Common myeloid progenitor, CD34-positive (primary cell): ENCODE measurements at regions of chr19 and their contacts with region 1.

Region 1: GRCh38 chr19:55605207-55605636 is 225 bp upstream of the ZNF865 start:
- DNase-seq: peak; percentile 95 to 97 (median 97)
- H3K4me3 ChIP-seq: peak overlapping the region; percentile 43 to 95 (median 78)
- H3K27ac ChIP-seq: peak overlapping the region; percentile 55 to 87
- H3K4me1 ChIP-seq: peaks cover 0 to 38% (median 32%) of the 10 kb centered on the region in 4 experiments
- H3K27me3 ChIP-seq: no peaks in the 10 kb centered on the region

Region 2: GRCh38 chr19:55516878-55517620 is 88.2 kb before region 1 on chr19:
- CTCF ChIA-PET with region 1: interaction called, 11 read pairs
- POLR2A ChIA-PET with region 1: interaction called, 3 read pairs
- DNase-seq: peak; percentile 90 to 93 (median 90)
- H3K4me3 ChIP-seq: peak overlapping the region in 6 of 7 experiments; percentile 27 to 79 (median 64)
- H3K27ac ChIP-seq: peak overlapping the region; percentile 6 to 79
- H3K4me1 ChIP-seq: peaks cover 0 to 7% (median 4%) of the 10 kb centered on the region in 4 experiments
- H3K27me3 ChIP-seq: no peaks in the 10 kb centered on the region

Region 3: DNA sequence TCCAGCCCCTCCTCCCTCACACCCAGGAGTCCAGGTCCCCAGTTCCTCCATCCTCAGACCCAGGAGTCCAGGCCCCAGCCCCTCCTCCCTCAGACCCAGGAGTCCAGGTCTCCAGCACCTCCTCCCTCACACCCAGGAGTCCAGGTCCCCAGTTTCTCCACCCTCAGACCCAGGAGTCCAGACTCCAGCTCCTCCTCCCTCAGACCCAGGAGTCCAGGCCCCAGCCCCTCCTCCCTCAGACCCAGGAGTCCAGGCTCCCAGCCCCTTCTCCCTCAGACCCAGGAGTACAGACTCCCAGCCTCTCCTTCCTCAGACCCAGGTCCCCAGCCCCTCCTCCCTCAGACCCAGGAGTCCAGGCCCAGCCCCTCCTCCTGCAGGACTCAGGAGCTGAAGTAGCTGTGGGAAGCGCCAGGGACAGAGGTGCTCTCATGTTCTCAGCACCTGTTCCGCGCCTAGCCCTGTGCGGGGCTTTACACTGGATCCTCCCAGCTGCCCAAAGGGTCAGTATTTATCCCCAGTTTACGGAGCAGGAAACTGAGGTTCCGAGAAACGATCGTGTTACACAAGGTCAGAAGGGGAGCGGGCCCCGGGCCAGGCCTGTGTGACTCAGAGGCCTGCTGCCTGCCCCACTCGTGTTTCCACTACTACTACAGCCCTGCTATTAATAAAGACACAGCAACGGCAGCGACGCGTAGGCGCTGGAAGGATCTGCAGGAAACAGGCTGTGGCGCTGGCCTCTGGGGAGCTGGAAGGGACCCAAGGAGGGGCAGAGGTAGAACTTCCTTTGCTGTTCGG is 58.2 kb before region 1 on chr19:
- CTCF ChIA-PET with region 1: interaction called, 11 read pairs
- POLR2A ChIA-PET with region 1: no interaction called
- DNase-seq: peak; percentile 81 to 95 (median 91)
- H3K4me3 ChIP-seq: peak overlapping the region in 3 of 7 experiments; percentile 11 to 45 (median 24)
- H3K27ac ChIP-seq: peak overlapping the region; percentile 50 to 81
- H3K4me1 ChIP-seq: peaks cover 0 to 33% (median 20%) of the 10 kb centered on the region in 4 experiments
- H3K27me3 ChIP-seq: no peaks in the 10 kb centered on the region

Region 4: GRCh38 chr19:55624109-55625003 is 19.1 kb after region 1 on chr19 and contains the start of gene ZNF784:
- CTCF ChIA-PET with region 1: interaction called, 32 read pairs
- POLR2A ChIA-PET with region 1: interaction called, 3 read pairs
- DNase-seq: peak; percentile 91 to 94 (median 93)
- H3K4me3 ChIP-seq: peak within 1 kb of the TSS; percentile 46 to 88 (median 72)
- H3K27ac ChIP-seq: peak within 1 kb of the TSS; percentile 77 to 92
- H3K4me1 ChIP-seq: peaks cover 2 to 29% (median 21%) of the 10 kb centered on the region in 4 experiments
- H3K27me3 ChIP-seq: no peaks in the 10 kb centered on the region

Region 5: GRCh38 chr19:55678121-55678675 is 73.0 kb after region 1 on chr19:
- CTCF ChIA-PET with region 1: no interaction called
- POLR2A ChIA-PET with region 1: no interaction called
- DNase-seq: peak in 2 of 3 donors; percentile 36 to 53
- H3K4me3 ChIP-seq: no peak overlapping the region
- H3K27ac ChIP-seq: peak overlapping the region in 1 of 2 experiments; percentile 29
- H3K4me1 ChIP-seq: peaks cover 9 to 42% (median 37%) of the 10 kb centered on the region in 4 experiments
- H3K27me3 ChIP-seq: no peaks in the 10 kb centered on the region